ENCODE measurements at regions of chr1 and their contacts with region 1.

Region 1: GRCh38 chr1:206544562-206545257 is 37.4 kb downstream of the RASSF5 start:
- DNase-seq: peak; percentile 64
- H3K4me3 ChIP-seq: no peak overlapping the region
- H3K27ac ChIP-seq: no peak overlapping the region
- H3K4me1 ChIP-seq: no peaks in the 10 kb centered on the region
- H3K27me3 ChIP-seq: peaks cover 4 to 19% of the 10 kb centered on the region in 2 experiments
- CTCF ChIP-seq: peak; percentile 82 to 92
- POLR2A ChIP-seq: no peak

Region 2: GRCh38 chr1:205284343-205285144 is 1260.2 kb before region 1 on chr1:
- CTCF ChIA-PET with region 1: no interaction called
- POLR2A ChIA-PET with region 1: no interaction called
- dilution Hi-C with region 1: no loop called
- intact Hi-C with region 1: no loop called
- DNase-seq: peak; percentile 95
- H3K4me3 ChIP-seq: no peak overlapping the region
- H3K27ac ChIP-seq: peak overlapping the region; percentile 45
- H3K4me1 ChIP-seq: peaks cover 34% of the 10 kb centered on the region
- H3K27me3 ChIP-seq: no peaks in the 10 kb centered on the region
- CTCF ChIP-seq: peak in 1 of 2 donors; percentile 9
- POLR2A ChIP-seq: peak; percentile 33

Region 3: DNA sequence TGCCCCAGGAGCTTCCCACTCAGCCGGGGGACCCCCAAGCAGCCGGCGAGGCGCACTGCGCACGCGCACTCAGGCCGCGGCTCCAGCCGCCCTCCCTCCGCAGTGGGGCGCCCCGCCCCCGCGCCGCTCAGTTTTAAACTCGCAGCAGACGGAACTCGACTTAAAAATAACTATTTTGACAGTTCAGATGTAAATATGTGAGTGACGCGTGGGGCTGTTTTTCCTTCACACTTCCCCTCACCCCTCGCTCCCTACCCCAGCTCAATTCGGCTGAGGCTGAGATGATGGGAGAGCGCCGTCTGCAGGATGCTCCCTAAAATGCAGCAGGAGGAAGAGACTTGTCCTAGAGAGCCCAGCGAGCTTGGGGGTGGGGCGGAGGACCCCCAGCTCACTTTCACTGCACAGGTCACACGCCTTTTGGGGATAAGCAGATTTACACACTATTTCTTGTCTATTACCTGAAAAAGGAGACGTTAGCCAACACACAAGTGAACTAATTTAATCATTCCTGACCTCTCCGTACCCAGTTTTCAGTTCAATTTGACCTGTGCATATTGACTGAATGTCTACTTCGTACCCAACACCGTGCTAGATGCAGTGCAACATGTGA is 1113.9 kb before region 1 on chr1:
- CTCF ChIA-PET with region 1: no interaction called
- POLR2A ChIA-PET with region 1: no interaction called
- dilution Hi-C with region 1: no loop called
- intact Hi-C with region 1: no loop called
- DNase-seq: peak; percentile 59
- H3K4me3 ChIP-seq: peak overlapping the region; percentile 18 to 51 (median 34)
- H3K27ac ChIP-seq: no peak overlapping the region
- H3K4me1 ChIP-seq: no peaks in the 10 kb centered on the region
- H3K27me3 ChIP-seq: peaks cover 12 to 19% of the 10 kb centered on the region in 2 experiments
- CTCF ChIP-seq: peak; percentile 67 to 79
- POLR2A ChIP-seq: no peak

Region 4: GRCh38 chr1:206415942-206416341 is 128.8 kb before region 1 on chr1:
- CTCF ChIA-PET with region 1: no interaction called
- POLR2A ChIA-PET with region 1: no interaction called
- dilution Hi-C with region 1: no loop called
- intact Hi-C with region 1: no loop called
- DNase-seq: no peak
- H3K4me3 ChIP-seq: no peak overlapping the region
- H3K27ac ChIP-seq: no peak overlapping the region
- H3K4me1 ChIP-seq: peaks cover 9% of the 10 kb centered on the region
- H3K27me3 ChIP-seq: no peaks in the 10 kb centered on the region
- CTCF ChIP-seq: no peak
- POLR2A ChIP-seq: no peak

Region 5: DNA sequence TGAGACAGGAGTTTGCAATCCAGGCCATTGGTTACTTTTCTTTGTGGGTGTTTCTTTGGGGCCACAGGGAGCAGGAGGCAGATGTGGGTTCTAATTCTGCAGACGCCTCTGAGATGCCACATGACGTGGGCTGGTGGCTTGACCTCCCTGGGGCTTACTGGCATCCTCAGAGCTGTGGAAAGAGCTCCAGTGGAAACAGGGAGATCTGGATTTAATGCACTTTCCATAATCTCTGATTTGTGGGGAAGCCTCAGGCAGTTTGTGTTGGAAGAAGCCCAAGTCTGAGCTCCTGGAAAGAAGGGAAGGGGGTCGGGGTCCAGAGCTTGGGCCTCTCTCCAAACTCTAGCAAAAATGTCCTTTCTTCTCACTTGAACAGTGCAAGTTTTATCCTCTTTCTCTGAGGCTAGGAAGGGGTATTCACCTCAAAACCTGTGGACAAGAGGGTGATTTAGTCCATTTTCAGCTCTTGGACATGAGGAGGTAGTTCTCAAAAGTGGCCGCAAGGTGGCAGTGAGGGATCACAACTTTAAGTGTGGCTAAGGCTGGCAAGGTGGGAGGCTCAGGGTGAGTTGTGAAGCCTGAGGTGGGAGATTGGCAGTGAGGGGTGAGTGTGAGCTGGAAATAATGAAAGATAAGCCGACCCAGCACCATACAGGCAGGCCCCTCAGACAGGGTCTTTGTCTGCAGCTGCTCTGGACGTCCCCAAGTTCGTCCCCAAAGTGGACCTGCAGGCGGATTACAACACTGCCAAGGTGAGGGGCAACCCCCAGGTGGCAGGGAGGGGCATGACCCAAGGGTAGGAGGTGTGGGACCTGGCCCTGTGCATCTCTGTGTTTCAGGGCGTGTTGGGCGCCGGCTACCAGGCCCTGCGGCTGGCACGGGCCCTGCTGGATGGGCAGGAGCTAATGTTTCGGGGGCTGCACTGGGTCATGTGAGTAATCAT is 65.3 kb before region 1 on chr1:
- CTCF ChIA-PET with region 1: interaction called, 28 read pairs
- POLR2A ChIA-PET with region 1: no interaction called
- dilution Hi-C with region 1: no loop called
- intact Hi-C with region 1: loop called (anchors 1 kb)
- DNase-seq: peak; percentile 74
- H3K4me3 ChIP-seq: no peak overlapping the region
- H3K27ac ChIP-seq: no peak overlapping the region
- H3K4me1 ChIP-seq: no peaks in the 10 kb centered on the region
- H3K27me3 ChIP-seq: no peaks in the 10 kb centered on the region
- CTCF ChIP-seq: peak; percentile 76 to 77
- POLR2A ChIP-seq: no peak

Region 6: GRCh38 chr1:206489980-206490770 is 54.5 kb before region 1 on chr1:
- CTCF ChIA-PET with region 1: interaction called, 16 read pairs
- POLR2A ChIA-PET with region 1: no interaction called
- dilution Hi-C with region 1: no loop called
- intact Hi-C with region 1: loop called (anchors 1 kb)
- DNase-seq: peak; percentile 59
- H3K4me3 ChIP-seq: no peak overlapping the region
- H3K27ac ChIP-seq: no peak overlapping the region
- H3K4me1 ChIP-seq: peaks cover 8% of the 10 kb centered on the region
- H3K27me3 ChIP-seq: no peaks in the 10 kb centered on the region
- CTCF ChIP-seq: peak; percentile 83 to 92
- POLR2A ChIP-seq: no peak

Region 7: GRCh38 chr1:206496131-206496793 is 48.4 kb before region 1 on chr1:
- CTCF ChIA-PET with region 1: interaction called, 11 read pairs
- POLR2A ChIA-PET with region 1: no interaction called
- dilution Hi-C with region 1: no loop called
- intact Hi-C with region 1: no loop called
- DNase-seq: no peak
- H3K4me3 ChIP-seq: no peak overlapping the region
- H3K27ac ChIP-seq: no peak overlapping the region
- H3K4me1 ChIP-seq: peaks cover 2% of the 10 kb centered on the region
- H3K27me3 ChIP-seq: no peaks in the 10 kb centered on the region
- CTCF ChIP-seq: no peak
- POLR2A ChIP-seq: no peak

Region 8: GRCh38 chr1:206556750-206557635 is 12.3 kb after region 1 on chr1:
- CTCF ChIA-PET with region 1: interaction called, 57 read pairs
- POLR2A ChIA-PET with region 1: no interaction called
- dilution Hi-C with region 1: no loop called
- intact Hi-C with region 1: no loop called
- DNase-seq: peak; percentile 41
- H3K4me3 ChIP-seq: peak overlapping the region; percentile 36 to 53 (median 36)
- H3K27ac ChIP-seq: no peak overlapping the region
- H3K4me1 ChIP-seq: peaks cover 6% of the 10 kb centered on the region
- H3K27me3 ChIP-seq: peaks cover 30 to 33% of the 10 kb centered on the region in 2 experiments
- CTCF ChIP-seq: no peak
- POLR2A ChIP-seq: no peak

Region 9: GRCh38 chr1:206568256-206568655 is 23.5 kb after region 1 on chr1:
- CTCF ChIA-PET with region 1: interaction called, 427 read pairs
- POLR2A ChIA-PET with region 1: no interaction called
- dilution Hi-C with region 1: no loop called
- intact Hi-C with region 1: no loop called
- DNase-seq: no peak
- H3K4me3 ChIP-seq: no peak overlapping the region
- H3K27ac ChIP-seq: no peak overlapping the region
- H3K4me1 ChIP-seq: peaks cover 5% of the 10 kb centered on the region
- H3K27me3 ChIP-seq: peaks cover 7 to 12% of the 10 kb centered on the region in 2 experiments
- CTCF ChIP-seq: no peak
- POLR2A ChIP-seq: no peak

Region 10: GRCh38 chr1:206575165-206575893 is 30.6 kb after region 1 on chr1:
- CTCF ChIA-PET with region 1: interaction called, 427 read pairs
- POLR2A ChIA-PET with region 1: no interaction called
- dilution Hi-C with region 1: no loop called
- intact Hi-C with region 1: loop called (anchors 2 kb)
- DNase-seq: peak; percentile 91
- H3K4me3 ChIP-seq: no peak overlapping the region
- H3K27ac ChIP-seq: peak overlapping the region; percentile 46
- H3K4me1 ChIP-seq: peaks cover 26% of the 10 kb centered on the region
- H3K27me3 ChIP-seq: no peaks in the 10 kb centered on the region
- CTCF ChIP-seq: no peak
- POLR2A ChIP-seq: no peak

Region 11: GRCh38 chr1:206856674-206857464 is 312.2 kb after region 1 on chr1:
- CTCF ChIA-PET with region 1: no interaction called
- POLR2A ChIA-PET with region 1: no interaction called
- dilution Hi-C with region 1: no loop called
- intact Hi-C with region 1: no loop called
- DNase-seq: no peak
- H3K4me3 ChIP-seq: no peak overlapping the region
- H3K27ac ChIP-seq: no peak overlapping the region
- H3K4me1 ChIP-seq: no peaks in the 10 kb centered on the region
- H3K27me3 ChIP-seq: no peaks in the 10 kb centered on the region
- CTCF ChIP-seq: no peak
- POLR2A ChIP-seq: no peak

Measured in endothelial cell of umbilical vein (primary cell).